ENCODE measurements at regions of chr19 and their contacts with region 1.

Region 1: GRCh38 chr19:49640113-49640898 is at the start of gene RRAS:
- DNase-seq: peak; percentile 97 to 100 (median 100)
- H3K4me3 ChIP-seq: peak within 1 kb of the TSS; percentile 55 to 100 (median 97)
- H3K27ac ChIP-seq: peak within 1 kb of the TSS; percentile 60 to 99 (median 94)
- H3K27me3 ChIP-seq: no peaks in the 10 kb centered on the region
- CTCF ChIP-seq: peak in 16 of 56 donors; percentile 5 to 32 (median 14)
- total RNA-seq, gene RRAS: 5.4 to 32.8 (median 12.9) TPM

Region 2: DNA sequence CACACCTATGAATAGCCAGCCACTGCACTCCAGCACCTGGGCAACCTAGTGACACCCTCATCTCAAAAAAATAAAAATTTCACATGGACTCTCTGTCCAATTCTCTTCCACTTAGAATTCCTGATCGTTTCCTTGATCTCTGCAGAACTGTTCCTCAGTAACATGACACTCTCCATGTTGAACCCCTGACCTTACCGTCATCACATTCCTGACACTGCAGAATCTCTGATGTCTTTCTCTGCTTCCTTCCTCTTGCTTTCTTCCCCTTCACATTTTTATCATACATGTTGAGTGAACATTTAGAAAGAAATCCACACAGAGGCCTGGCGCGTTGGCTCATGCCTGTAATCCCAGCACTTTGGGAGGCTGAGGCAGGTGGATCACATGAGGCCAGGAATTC is 1355.4 kb before region 1 on chr19:
- intact Hi-C with region 1: no loop called
- DNase-seq: no peak
- H3K4me3 ChIP-seq: no peak overlapping the region
- H3K27ac ChIP-seq: no peak overlapping the region
- H3K27me3 ChIP-seq: no peaks in the 10 kb centered on the region
- CTCF ChIP-seq: no peak

Region 3: GRCh38 chr19:49487277-49488045 is 152.8 kb before region 1 on chr19 and contains the start of gene RPL13A:
- intact Hi-C with region 1: loop called (anchors 5 to 10 kb)
- DNase-seq: peak; percentile 97 to 100 (median 99)
- H3K4me3 ChIP-seq: peak within 1 kb of the TSS; percentile 72 to 100 (median 95)
- H3K27ac ChIP-seq: peak within 1 kb of the TSS; percentile 21 to 99 (median 95)
- H3K27me3 ChIP-seq: no peaks in the 10 kb centered on the region
- CTCF ChIP-seq: peak in 30 of 56 donors; percentile 10 to 65 (median 26)
- total RNA-seq, gene RPL13A: 564 to 1,173 (median 771) TPM

Region 4: DNA sequence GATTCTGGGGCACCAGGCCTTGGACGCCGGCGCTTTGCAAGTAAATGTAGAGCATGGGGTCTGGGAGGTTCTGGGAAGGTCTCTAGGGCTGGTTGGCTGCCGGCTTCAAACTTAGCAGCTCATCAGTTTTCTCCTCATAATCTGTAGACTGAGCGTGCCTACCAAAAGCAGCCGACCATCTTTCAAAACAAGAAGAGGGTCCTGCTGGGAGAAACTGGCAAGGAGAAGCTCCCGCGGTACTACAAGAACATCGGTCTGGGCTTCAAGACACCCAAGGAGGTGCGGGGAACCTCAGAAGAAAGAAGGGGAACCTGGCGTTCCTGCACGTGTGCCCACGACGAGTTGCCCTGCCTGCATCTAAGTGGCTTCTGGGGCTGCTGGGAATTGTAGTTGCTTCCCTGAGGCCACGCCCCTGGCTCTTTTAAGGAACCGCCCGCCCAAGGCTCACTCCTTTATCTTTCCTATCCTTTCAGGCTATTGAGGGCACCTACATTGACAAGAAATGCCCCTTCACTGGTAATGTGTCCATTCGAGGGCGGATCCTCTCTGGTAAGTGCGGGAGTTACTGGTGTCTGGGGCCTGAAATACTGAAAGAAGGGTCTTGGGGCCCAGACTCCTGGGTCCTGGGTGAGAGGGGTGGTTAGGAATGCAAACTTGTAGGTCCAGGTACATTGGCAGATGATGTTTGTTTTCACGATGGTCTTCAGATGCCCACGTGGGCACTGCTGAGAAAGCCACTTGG is 143.1 kb before region 1 on chr19:
- intact Hi-C with region 1: loop called in 1 of 2 experiments (anchors 10 kb)
- DNase-seq: peak in 2 of 10 donors; percentile 47 to 51
- H3K4me3 ChIP-seq: peak overlapping the region; percentile 55 to 100 (median 92)
- H3K27ac ChIP-seq: peak overlapping the region in 56 of 59 donors; percentile 83 to 99 (median 96)
- H3K27me3 ChIP-seq: no peaks in the 10 kb centered on the region
- CTCF ChIP-seq: no peak

Region 5: DNA sequence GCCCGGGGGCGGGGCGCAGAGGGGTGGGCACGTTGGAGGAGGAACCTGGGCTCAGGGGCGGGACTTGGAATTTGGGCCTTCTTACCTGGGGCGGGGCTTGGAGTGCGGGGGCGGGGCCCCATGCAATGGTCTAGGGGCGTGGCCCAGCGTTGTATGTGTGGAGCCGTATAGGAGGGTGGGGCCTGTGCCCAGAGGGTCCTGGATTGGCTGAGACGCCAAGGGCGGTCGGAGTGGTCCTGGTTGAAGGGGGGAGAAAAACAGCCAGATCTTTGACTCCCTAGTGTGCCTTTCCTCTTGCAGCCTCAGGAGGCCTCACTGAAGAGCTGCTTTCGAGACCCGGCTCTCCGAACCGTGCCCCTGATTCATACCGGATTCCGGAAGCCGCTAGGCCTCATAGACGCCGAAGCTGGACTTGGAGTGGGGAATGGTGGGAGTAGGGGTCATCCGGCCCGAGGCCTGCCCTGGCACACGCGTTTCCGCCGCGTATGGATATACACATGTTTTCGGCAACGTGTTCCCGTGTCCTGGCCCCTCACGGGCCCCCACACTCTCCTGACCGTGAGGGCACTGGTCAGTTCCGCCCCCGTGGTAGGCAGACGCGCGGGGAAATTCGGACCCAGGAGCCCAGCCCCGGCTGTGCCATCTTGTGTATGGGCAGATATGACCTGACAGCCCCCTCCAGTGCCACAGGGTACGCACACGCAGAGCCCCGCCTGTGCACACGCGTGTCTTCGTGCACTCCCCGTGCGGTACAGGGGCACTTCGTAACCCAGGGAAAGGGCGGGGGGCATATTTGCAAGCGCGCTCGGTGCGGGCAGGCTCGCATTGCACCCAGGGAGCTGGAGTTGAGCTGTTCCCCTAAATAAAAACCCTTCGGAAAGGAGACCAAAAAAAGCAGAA is 50.0 kb before region 1 on chr19:
- intact Hi-C with region 1: loop called (anchors 2 to 5 kb)
- DNase-seq: peak; percentile 70 to 95 (median 90)
- H3K4me3 ChIP-seq: peak overlapping the region; percentile 57 to 99 (median 79)
- H3K27ac ChIP-seq: peak overlapping the region; percentile 65 to 99 (median 96)
- H3K27me3 ChIP-seq: no peaks in the 10 kb centered on the region
- CTCF ChIP-seq: peak in 1 of 56 donors; percentile 8

Region 6: GRCh38 chr19:49665351-49666119 is 25.2 kb after region 1 on chr19 and contains the starts of genes BCL2L12 and IRF3:
- intact Hi-C with region 1: loop called in 1 of 2 experiments (anchors 2 kb)
- DNase-seq: peak; percentile 93 to 98 (median 96)
- H3K4me3 ChIP-seq: peak within 1 kb of the TSS; percentile 62 to 99 (median 85)
- H3K27ac ChIP-seq: peak within 1 kb of the TSS; percentile 4 to 94 (median 86)
- H3K27me3 ChIP-seq: no peaks in the 10 kb centered on the region
- CTCF ChIP-seq: peak in 24 of 56 donors; percentile 6 to 44 (median 24)
- total RNA-seq, gene BCL2L12: 0.87 to 9.6 (median 3.6) TPM
- total RNA-seq, gene IRF3: 44.4 to 102 (median 65.0) TPM